ENCODE measurements at regions of chr17 and their contacts with region 1.

Region 1: GRCh38 chr17:61837175-61838051 is 25.9 kb downstream of the BRIP1 start:
- DNase-seq: peak; percentile 74
- ATAC-seq: peak; percentile 79
- H3K4me3 ChIP-seq: no peak overlapping the region
- H3K27ac ChIP-seq: no peak overlapping the region
- H3K4me1 ChIP-seq: peaks cover 17 to 21% of the 10 kb centered on the region in 2 experiments
- H3K27me3 ChIP-seq: no peaks in the 10 kb centered on the region
- CTCF ChIP-seq: peak; percentile 74 to 92 (median 89)
- POLR2A ChIP-seq: no peak
- RAD21 ChIP-seq: peak; percentile 93

Region 2: DNA sequence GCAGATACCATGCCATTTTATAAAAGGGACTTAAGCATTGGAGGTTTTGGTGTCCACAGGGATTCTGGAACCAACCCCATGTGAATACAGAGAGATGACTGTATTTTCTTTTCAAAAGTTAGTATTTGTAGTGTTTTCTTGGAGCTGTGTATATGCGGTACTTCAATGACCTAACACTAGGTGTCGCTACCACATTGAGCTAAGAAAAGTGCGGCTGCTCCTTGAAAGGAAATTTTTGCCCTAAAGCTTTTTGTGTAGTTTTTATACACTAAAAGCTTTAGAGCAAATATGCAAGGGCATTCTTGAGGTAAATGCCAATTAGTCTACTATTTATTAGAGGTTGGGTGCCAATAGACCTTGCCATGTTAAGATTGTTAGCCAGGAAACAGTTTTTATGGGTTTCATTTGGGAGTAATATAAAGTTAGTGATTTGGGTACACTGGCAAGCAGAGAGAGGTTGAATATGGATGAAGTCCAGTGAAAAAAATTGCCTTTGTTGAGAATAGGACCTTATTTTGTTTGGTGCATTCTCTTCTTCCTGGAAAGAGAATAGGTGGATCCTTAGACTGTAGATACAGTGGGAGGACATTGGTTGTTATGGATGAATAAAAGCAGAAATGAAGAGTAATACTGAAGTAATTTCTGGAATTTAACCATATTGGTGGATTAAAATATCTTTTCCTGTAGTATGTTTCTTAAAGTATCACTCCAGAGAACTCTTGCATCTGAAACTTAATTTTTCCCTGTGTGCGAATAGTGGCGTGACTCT is 1116.5 kb before region 1 on chr17:
- CTCF ChIA-PET with region 1: interaction called, 5 read pairs
- POLR2A ChIA-PET with region 1: no interaction called
- RAD21 ChIA-PET with region 1: no interaction called
- intact Hi-C with region 1: loop called (anchors 10 kb)
- DNase-seq: peak; percentile 60
- ATAC-seq: peak; percentile 90
- H3K4me3 ChIP-seq: no peak overlapping the region
- H3K27ac ChIP-seq: no peak overlapping the region
- H3K4me1 ChIP-seq: no peaks in the 10 kb centered on the region
- H3K27me3 ChIP-seq: no peaks in the 10 kb centered on the region
- CTCF ChIP-seq: peak; percentile 86 to 99 (median 96)
- POLR2A ChIP-seq: no peak
- RAD21 ChIP-seq: peak; percentile 92

Region 3: GRCh38 chr17:61002316-61002736 is 835.1 kb before region 1 on chr17:
- CTCF ChIA-PET with region 1: no interaction called
- POLR2A ChIA-PET with region 1: no interaction called
- RAD21 ChIA-PET with region 1: no interaction called
- intact Hi-C with region 1: loop called (anchors 10 kb)
- DNase-seq: peak; percentile 26
- ATAC-seq: peak; percentile 69
- H3K4me3 ChIP-seq: no peak overlapping the region
- H3K27ac ChIP-seq: no peak overlapping the region
- H3K4me1 ChIP-seq: no peaks in the 10 kb centered on the region
- H3K27me3 ChIP-seq: no peaks in the 10 kb centered on the region
- CTCF ChIP-seq: peak; percentile 49 to 88 (median 77); a peak in 5 of 6 replicates
- POLR2A ChIP-seq: no peak
- RAD21 ChIP-seq: peak; percentile 88

Region 4: GRCh38 chr17:61418449-61418848 is 419.0 kb before region 1 on chr17:
- CTCF ChIA-PET with region 1: interaction called, 15 read pairs
- POLR2A ChIA-PET with region 1: no interaction called
- RAD21 ChIA-PET with region 1: no interaction called
- intact Hi-C with region 1: loop called (anchors 1 kb)
- DNase-seq: no peak
- ATAC-seq: no peak
- H3K4me3 ChIP-seq: no peak overlapping the region
- H3K27ac ChIP-seq: no peak overlapping the region
- H3K4me1 ChIP-seq: peaks cover 36 to 41% of the 10 kb centered on the region in 2 experiments
- H3K27me3 ChIP-seq: no peaks in the 10 kb centered on the region
- CTCF ChIP-seq: no peak
- POLR2A ChIP-seq: no peak
- RAD21 ChIP-seq: no peak

Region 5: DNA sequence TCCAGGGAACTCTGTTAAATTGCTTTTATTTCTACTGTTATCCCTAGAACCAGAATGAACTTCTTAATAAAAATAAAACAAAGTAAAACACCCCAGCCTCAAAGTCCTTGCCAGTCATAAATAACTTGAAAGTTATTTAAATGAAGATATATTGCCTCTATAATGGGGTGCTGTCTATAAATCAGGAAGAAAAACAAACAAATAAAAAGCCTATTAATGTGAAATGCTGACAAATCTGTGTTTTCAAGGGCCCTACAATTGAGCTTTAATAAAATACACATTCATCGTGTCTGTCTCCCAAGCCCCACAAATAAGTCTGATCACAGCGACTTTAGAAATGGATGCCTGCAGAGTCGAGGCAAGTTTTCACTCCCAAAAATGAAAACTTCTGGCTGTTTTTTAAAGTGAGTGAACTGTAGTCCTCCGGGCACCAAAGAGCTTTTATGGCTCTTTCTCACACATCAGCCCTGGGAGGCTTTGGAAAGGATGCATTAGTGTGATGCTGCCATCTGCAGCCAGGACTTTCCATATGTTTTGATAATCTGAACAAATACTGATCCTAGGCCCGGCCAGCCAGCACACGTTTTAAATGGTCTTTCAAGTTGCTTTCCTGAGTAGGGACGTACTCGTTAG is 262.8 kb before region 1 on chr17:
- CTCF ChIA-PET with region 1: interaction called, 6 read pairs
- POLR2A ChIA-PET with region 1: no interaction called
- RAD21 ChIA-PET with region 1: no interaction called
- intact Hi-C with region 1: loop called (anchors 2 kb)
- DNase-seq: peak; percentile 74
- ATAC-seq: peak; percentile 92
- H3K4me3 ChIP-seq: peak overlapping the region in 1 of 2 experiments; percentile 6; a peak in 2 of 4 replicates
- H3K27ac ChIP-seq: peak overlapping the region; percentile 66
- H3K4me1 ChIP-seq: peaks cover 28 to 41% of the 10 kb centered on the region in 2 experiments
- H3K27me3 ChIP-seq: no peaks in the 10 kb centered on the region
- CTCF ChIP-seq: peak; percentile 57 to 89 (median 67)
- POLR2A ChIP-seq: no peak
- RAD21 ChIP-seq: peak; percentile 96

Region 6: DNA sequence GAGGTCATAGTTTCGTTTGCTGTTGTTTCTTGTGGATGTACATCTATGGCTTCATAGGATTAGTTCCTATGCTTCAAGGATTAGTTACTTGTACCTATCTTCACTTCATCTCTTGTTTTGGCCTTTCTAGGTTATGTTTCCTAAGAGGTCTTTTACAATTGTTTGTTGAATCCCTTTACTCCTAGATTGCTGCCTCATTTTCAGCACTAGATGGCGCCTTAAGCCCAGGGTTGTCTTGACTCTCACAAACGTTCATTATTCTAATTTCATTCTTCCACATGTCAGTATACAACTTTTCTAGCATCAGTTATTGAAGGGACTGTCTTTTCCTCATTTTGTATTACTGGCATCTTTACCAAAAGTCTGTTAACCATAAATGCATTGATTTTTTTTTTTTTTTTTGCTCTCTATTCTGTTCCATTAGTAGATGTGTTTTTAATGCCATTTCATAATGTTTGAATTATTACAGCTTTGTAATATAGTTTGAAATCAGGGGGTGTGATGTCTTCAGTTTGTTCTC is 201.4 kb before region 1 on chr17:
- CTCF ChIA-PET with region 1: interaction called, 14 read pairs
- POLR2A ChIA-PET with region 1: no interaction called
- RAD21 ChIA-PET with region 1: no interaction called
- intact Hi-C with region 1: loop called (anchors 1 kb)
- DNase-seq: peak; percentile 65
- ATAC-seq: peak; percentile 80
- H3K4me3 ChIP-seq: no peak overlapping the region
- H3K27ac ChIP-seq: no peak overlapping the region
- H3K4me1 ChIP-seq: no peaks in the 10 kb centered on the region
- H3K27me3 ChIP-seq: no peaks in the 10 kb centered on the region
- CTCF ChIP-seq: peak; percentile 88 to 99 (median 89)
- POLR2A ChIP-seq: no peak
- RAD21 ChIP-seq: peak; percentile 96

Measured in HCT116 (cell line).